Calu3 (cell line): ENCODE measurements at regions of chr6 and their contacts with region 1.

Region 1: DNA sequence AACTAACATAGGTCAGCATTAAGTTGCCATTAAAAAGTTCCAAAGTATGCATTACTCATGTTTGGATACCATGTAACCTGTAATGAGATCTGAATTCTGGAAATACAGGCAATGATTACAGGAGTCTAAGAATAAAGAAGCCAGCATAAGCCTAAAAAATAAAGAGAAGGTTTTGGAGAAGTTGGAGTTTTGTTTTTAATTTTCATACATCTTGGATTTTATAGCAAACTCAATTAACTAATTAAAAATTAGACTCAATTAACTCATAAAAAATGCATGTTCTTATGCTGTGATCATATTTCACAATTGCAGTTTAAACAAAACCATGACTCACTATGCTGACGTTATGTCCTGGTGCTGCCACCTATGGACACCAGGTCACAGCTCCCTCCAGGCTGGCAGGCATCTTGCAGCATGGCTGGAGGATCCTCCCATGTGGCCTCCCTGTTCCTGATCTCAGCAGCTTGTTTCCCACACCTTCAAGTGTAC is 648.8 kb upstream of the AGPAT4 start:
- DNase-seq: peak; percentile 79
- H3K4me3 Mint-ChIP-seq: no peak overlapping the region
- H3K27ac Mint-ChIP-seq: peak overlapping the region; percentile 80
- H3K4me1 Mint-ChIP-seq: peaks cover 41% of the 10 kb centered on the region
- H3K27me3 Mint-ChIP-seq: no peaks in the 10 kb centered on the region
- CTCF ChIP-seq: peak; percentile 36

Region 2: DNA sequence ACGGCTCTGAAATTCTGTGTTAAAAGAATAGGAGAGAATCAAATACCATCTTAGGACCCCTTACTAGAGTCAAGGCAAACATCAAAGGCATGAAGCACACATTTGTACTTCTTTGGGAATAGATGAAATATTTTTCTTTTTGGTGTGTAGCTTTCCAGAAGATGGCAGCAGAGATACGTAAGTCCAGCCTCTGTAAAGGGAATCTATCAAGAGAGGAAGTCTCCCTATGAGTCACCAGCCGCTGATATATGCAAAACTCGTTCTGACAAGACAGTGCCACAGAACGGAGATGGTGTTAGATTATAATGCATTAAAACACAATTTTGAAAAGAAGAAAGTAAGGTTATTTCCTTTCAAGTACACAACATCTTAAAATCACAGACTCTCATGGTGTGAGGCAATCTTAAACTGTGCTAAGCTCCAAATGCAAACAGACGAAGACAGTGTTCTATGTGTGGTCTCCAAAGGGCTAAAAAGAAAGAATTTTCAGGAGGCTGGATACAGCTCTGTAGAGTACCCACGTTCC is 528.8 kb before region 1 on chr6:
- CTCF ChIA-PET with region 1: no interaction called
- intact Hi-C with region 1: loop called (anchors 10 kb)
- DNase-seq: peak; percentile 55
- H3K4me3 Mint-ChIP-seq: no peak overlapping the region
- H3K27ac Mint-ChIP-seq: no peak overlapping the region
- H3K4me1 Mint-ChIP-seq: no peaks in the 10 kb centered on the region
- H3K27me3 Mint-ChIP-seq: peaks cover 12% of the 10 kb centered on the region
- CTCF ChIP-seq: peak; percentile 62

Region 3: GRCh38 chr6:161618831-161619454 is 303.7 kb before region 1 on chr6:
- CTCF ChIA-PET with region 1: no interaction called
- intact Hi-C with region 1: loop called (anchors 10 kb)
- DNase-seq: peak; percentile 38
- H3K4me3 Mint-ChIP-seq: no peak overlapping the region
- H3K27ac Mint-ChIP-seq: no peak overlapping the region
- H3K4me1 Mint-ChIP-seq: no peaks in the 10 kb centered on the region
- H3K27me3 Mint-ChIP-seq: no peaks in the 10 kb centered on the region
- CTCF ChIP-seq: peak; percentile 40

Region 4: GRCh38 chr6:161750686-161751085 is 172.0 kb before region 1 on chr6:
- CTCF ChIA-PET with region 1: interaction called, 3 read pairs
- intact Hi-C with region 1: loop called (anchors 5 kb)
- DNase-seq: no peak
- H3K4me3 Mint-ChIP-seq: no peak overlapping the region
- H3K27ac Mint-ChIP-seq: peak overlapping the region; percentile 37
- H3K4me1 Mint-ChIP-seq: peaks cover 13% of the 10 kb centered on the region
- H3K27me3 Mint-ChIP-seq: no peaks in the 10 kb centered on the region
- CTCF ChIP-seq: no peak

Region 5: DNA sequence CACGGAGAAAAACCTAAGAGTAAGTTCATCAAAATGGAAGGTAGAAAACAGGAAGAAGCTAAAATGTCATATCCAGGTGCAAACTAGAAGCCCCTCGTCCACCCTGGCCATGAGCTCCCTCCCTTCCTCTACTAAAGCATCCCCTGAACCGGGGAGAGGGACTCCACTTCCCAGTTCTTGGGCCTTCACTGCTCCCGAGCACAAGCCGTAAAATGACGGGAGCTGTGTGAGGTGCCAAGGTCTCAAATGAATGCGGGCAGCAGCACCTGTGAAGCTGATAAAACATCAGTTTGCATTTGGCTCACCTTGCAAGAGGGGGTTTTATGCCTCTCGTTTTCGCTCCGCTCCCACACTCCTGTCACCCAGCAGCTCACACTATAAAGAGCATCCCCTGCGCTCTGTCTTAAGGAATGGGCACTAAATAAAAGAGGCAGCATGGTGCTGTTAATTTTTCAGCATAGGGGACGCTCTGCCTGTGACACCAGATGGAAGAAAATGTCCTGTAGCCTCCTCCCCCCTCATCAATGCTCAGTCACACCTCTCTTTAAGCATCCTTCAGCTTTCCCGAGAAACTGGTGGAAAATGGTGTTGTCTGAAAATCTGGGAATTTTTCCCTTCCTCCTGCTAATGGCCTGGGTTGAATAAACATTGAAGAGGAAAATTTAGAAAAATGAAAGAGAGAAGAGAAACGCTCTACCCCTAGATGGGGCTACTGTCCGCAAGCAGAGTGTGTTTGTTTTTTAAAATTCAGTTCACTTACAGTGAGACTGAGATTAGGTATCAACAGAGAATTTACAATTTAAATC is 85.8 kb before region 1 on chr6:
- CTCF ChIA-PET with region 1: no interaction called
- intact Hi-C with region 1: loop called (anchors 5 kb)
- DNase-seq: peak; percentile 8
- H3K4me3 Mint-ChIP-seq: no peak overlapping the region
- H3K27ac Mint-ChIP-seq: no peak overlapping the region
- H3K4me1 Mint-ChIP-seq: peaks cover 6% of the 10 kb centered on the region
- H3K27me3 Mint-ChIP-seq: no peaks in the 10 kb centered on the region
- CTCF ChIP-seq: no peak

Region 6: GRCh38 chr6:162056745-162057144 is 134.1 kb after region 1 on chr6:
- CTCF ChIA-PET with region 1: no interaction called
- intact Hi-C with region 1: loop called (anchors 5 kb)
- DNase-seq: no peak
- H3K4me3 Mint-ChIP-seq: no peak overlapping the region
- H3K27ac Mint-ChIP-seq: no peak overlapping the region
- H3K4me1 Mint-ChIP-seq: peaks cover 30% of the 10 kb centered on the region
- H3K27me3 Mint-ChIP-seq: no peaks in the 10 kb centered on the region
- CTCF ChIP-seq: no peak

Region 7: DNA sequence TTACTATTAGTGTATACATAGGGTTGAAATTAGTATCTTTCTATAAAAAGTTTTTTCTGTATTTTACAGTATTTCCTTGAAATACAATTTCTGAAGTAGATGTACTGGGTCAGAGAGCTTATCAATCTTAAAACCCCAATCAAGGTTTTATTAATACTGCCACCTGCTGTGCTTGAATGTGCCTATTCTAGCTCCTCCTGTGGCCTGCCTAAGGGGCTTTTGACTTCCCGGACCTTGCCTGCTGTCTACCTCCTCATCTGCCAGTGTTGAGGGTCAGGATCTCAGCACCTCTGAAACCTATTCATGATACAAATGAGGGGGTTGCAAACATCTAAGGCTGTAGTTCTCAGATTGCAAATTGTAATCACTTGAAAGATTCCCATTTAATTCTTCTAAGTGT is 814.3 kb after region 1 on chr6:
- CTCF ChIA-PET with region 1: no interaction called
- intact Hi-C with region 1: loop called (anchors 10 kb)
- DNase-seq: peak; percentile 16
- H3K4me3 Mint-ChIP-seq: no peak overlapping the region
- H3K27ac Mint-ChIP-seq: no peak overlapping the region
- H3K4me1 Mint-ChIP-seq: peaks cover 8% of the 10 kb centered on the region
- H3K27me3 Mint-ChIP-seq: no peaks in the 10 kb centered on the region
- CTCF ChIP-seq: no peak